A673 (cell line): ENCODE measurements at regions of chr19 and their contacts with region 1.

Region 1: DNA sequence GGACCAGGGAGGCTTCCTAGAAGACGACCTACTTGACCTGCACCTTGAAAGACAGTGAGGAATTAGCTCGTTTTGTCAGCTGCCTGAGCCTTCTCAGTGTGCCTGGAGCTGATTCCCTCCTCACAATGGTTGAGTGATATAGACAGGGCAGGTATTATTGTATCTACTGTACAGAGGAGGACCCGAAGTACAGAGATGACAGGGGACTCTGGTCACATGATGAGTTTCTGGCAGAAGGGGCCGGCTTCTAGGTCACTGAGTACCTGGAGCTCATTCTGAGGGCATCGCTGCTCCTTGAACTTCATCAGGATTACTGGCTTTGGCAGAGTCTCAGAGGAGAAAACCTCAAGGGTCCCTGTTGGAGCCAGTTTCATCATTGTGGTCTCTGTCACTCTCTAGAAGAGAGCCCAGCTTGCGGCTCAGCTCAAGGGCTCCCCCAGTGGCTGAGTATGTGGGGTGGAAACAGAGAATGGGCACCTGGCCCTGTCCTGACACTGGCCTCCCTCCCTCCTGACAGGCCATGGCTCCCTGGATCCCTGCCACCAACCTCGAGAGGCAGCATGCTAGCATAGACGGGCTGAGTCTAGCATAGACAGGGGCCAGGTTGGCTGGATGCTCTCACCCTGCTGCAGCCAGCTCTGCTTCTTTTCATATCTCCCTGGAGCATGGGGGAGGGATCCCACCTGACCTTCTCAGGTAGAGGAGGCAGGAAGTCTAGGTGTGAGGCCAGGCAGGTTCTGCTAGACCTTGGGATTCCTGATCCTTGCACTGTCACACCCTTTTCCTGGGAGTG is 38.7 kb downstream of the NFIX start:
- DNase-seq: peak; percentile 57
- H3K4me3 ChIP-seq: no peak overlapping the region
- H3K27ac ChIP-seq: peak overlapping the region; percentile 38
- H3K4me1 ChIP-seq: peaks cover 47% of the 10 kb centered on the region
- H3K27me3 ChIP-seq: no peaks in the 10 kb centered on the region
- CTCF ChIP-seq: peak; percentile 78

Region 2: GRCh38 chr19:12965017-12965811 is 68.8 kb before region 1 on chr19:
- CTCF ChIA-PET with region 1: no interaction called
- POLR2A ChIA-PET with region 1: no interaction called
- intact Hi-C with region 1: no loop called
- DNase-seq: peak; percentile 85
- H3K4me3 ChIP-seq: peak overlapping the region; percentile 44
- H3K27ac ChIP-seq: peak overlapping the region; percentile 46
- H3K4me1 ChIP-seq: peaks cover 3% of the 10 kb centered on the region
- H3K27me3 ChIP-seq: no peaks in the 10 kb centered on the region
- CTCF ChIP-seq: peak; percentile 89

Region 3: DNA sequence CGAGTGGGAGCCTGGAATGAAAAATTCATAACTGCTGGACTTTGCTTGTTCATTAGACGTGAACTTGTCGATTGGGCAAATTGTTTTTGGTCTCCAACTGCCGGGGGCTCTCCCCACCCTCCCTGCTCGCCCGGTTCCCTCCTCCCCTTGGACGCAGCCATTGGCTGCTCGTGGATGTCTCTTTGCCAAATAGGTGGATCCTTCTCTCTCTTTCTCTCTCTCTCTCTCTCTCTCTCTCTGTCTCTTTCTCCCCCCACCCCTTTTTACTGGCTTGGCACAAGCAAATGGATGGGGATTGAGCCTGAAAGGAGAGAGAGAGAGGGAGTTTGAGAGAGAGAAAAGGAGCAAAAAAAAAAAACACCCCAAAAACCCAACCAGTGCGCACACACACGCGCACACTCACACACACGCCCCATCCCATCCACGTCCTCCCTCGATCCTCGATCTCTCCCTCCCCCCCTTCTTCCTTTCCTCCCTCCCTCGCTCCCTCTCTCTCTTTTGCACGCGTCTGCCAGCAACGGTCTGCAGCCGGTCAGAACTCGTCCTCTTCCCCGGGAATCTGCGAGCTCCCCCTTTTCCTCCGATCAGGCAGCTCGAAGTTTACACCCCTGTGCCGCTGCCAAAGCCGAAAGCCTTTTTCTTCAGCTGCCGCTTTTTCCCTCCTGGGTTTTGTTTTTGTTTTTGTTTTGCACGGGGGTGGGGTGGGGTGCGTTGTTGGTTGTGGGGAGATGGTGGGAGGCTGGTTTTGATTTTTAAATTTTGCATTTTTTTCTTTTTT is 11.0 kb before region 1 on chr19:
- CTCF ChIA-PET with region 1: interaction called, 17 read pairs
- POLR2A ChIA-PET with region 1: no interaction called
- intact Hi-C with region 1: no loop called
- DNase-seq: peak; percentile 94
- H3K4me3 ChIP-seq: peak overlapping the region; percentile 51
- H3K27ac ChIP-seq: peak overlapping the region; percentile 84
- H3K4me1 ChIP-seq: peaks cover 51% of the 10 kb centered on the region
- H3K27me3 ChIP-seq: no peaks in the 10 kb centered on the region
- CTCF ChIP-seq: no peak

Region 4: GRCh38 chr19:13060964-13061927 is 27.2 kb after region 1 on chr19:
- CTCF ChIA-PET with region 1: interaction called, 13 read pairs
- POLR2A ChIA-PET with region 1: no interaction called
- intact Hi-C with region 1: no loop called
- DNase-seq: peak; percentile 85
- H3K4me3 ChIP-seq: peak overlapping the region; percentile 43
- H3K27ac ChIP-seq: no peak overlapping the region
- H3K4me1 ChIP-seq: peaks cover 45% of the 10 kb centered on the region
- H3K27me3 ChIP-seq: no peaks in the 10 kb centered on the region
- CTCF ChIP-seq: peak; percentile 98

Region 5: DNA sequence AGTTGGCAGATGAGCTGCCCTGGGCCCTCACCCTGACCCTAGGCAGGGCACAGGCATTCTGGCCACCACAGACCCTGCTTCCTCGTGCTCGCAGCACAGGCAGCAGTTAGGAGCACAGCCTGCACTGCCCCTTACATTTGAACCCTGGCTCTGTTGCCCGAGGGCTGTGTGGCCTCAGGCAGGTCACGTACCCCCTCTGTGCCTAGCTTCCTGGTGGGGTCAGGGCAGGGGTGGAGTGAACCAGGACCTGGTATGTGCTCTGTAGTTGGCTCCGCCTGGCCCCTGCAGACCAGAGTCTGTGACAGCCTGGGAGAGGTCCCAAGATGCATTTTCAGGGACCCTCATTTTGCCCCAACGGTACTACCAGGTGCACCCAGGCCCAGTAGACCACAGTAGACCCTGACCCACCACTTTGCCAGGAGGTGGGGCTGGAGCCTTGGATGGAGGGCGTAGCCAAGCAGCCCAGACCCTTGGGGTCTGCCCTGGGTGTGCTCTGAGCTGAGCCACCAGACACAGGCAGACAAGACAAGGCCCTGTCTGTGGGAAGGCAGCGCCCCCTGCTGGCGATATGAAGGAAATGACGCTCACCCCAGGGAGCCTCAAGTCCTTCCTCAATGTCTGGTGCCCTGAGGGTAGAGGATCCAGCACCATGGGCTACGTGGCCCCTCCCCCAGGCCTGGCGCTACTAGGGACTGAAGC is 59.5 kb after region 1 on chr19:
- CTCF ChIA-PET with region 1: no interaction called
- POLR2A ChIA-PET with region 1: no interaction called
- intact Hi-C with region 1: loop called (anchors 5 kb)
- DNase-seq: peak; percentile 93
- H3K4me3 ChIP-seq: no peak overlapping the region
- H3K27ac ChIP-seq: peak overlapping the region; percentile 35
- H3K4me1 ChIP-seq: peaks cover 44% of the 10 kb centered on the region
- H3K27me3 ChIP-seq: no peaks in the 10 kb centered on the region
- CTCF ChIP-seq: peak; percentile 96

Region 6: DNA sequence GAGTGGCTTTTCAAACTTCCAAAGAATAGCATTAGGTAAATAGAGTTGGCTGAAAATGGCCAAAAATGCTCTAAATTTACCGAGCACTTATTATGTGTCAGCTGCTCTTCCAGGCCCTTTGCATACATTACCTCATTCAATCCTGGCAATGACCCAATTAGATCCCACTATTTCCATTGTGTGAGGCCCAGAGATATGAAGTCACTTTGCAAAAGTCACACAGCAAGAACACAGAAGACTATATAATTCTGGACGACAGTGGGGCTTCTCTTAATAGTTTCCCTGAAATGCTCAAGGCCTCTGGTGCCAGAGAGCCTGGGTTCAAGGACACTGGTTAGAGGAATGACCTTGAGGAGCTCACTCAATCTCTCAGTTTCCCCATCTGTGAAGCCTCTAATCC is 263.0 kb after region 1 on chr19:
- CTCF ChIA-PET with region 1: interaction called, 12 read pairs
- POLR2A ChIA-PET with region 1: no interaction called
- intact Hi-C with region 1: no loop called
- DNase-seq: no peak
- H3K4me3 ChIP-seq: no peak overlapping the region
- H3K27ac ChIP-seq: no peak overlapping the region
- H3K4me1 ChIP-seq: peaks cover 7% of the 10 kb centered on the region
- H3K27me3 ChIP-seq: no peaks in the 10 kb centered on the region
- CTCF ChIP-seq: no peak